CD4-positive, alpha-beta T cell (primary cell): ENCODE measurements at regions of chr2 and their contacts with region 1.

Region 1: DNA sequence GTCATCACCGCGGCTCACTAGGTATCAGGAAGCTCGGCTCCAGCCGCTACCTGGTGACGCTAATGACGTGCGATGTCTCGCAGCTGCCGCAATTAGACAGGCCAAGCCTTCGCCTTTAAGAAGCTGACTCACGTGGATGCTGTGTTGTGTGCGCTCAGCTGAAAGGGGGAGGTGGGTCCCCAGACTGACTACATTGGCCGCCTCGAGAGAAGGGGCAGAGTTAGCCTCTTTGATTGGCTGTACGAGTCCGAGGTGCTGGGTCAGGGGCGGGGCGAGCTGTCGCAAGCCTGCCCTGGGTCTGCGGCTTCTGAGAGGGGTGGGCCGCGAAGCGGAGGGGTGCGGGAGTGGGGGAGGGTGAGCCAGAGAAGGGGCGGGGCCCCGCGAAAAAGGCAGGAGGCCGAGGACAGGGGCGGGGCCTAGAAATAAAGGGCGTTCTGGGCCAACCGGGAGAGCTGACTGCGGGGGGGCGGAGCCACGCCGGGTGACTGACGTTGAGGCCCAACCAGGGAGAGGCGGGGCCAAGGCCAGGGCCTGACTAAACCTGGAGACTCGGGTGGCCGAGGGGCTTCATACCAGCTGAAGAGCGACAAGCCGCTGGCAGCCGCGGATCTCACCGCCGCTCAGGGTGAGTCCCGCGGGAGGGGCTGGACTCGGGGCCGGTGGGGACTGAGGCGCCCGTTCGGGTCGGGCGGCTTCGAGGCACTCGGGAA is at the start of gene YPEL5:
- DNase-seq: peak; percentile 99 to 100 (median 99)
- ATAC-seq: peak; percentile 82
- H3K4me3 ChIP-seq: peak within 1 kb of the TSS; percentile 71
- H3K4me3 Mint-ChIP-seq: peak within 1 kb of the TSS; percentile 94
- H3K27ac ChIP-seq: peak within 1 kb of the TSS; percentile 97 to 100
- H3K27ac Mint-ChIP-seq: peak within 1 kb of the TSS; percentile 99
- H3K4me1 ChIP-seq: peaks cover 38% of the 10 kb centered on the region
- H3K4me1 Mint-ChIP-seq: peaks cover 68% of the 10 kb centered on the region
- H3K27me3 ChIP-seq: no peaks in the 10 kb centered on the region
- H3K27me3 Mint-ChIP-seq: no peaks in the 10 kb centered on the region
- CTCF ChIP-seq: no peak
- total RNA-seq, gene YPEL5: 932 to 972 TPM

Region 2: GRCh38 chr2:29817801-29818680 is 328.6 kb before region 1 on chr2:
- CTCF ChIA-PET with region 1: no interaction called
- POLR2A ChIA-PET with region 1: no interaction called
- intact Hi-C with region 1: no loop called
- DNase-seq: no peak
- ATAC-seq: no peak
- H3K4me3 ChIP-seq: no peak overlapping the region
- H3K4me3 Mint-ChIP-seq: no peak overlapping the region
- H3K27ac ChIP-seq: no peak overlapping the region
- H3K27ac Mint-ChIP-seq: no peak overlapping the region
- H3K4me1 ChIP-seq: no peaks in the 10 kb centered on the region
- H3K4me1 Mint-ChIP-seq: no peaks in the 10 kb centered on the region
- H3K27me3 ChIP-seq: peaks cover 0 to 3% of the 10 kb centered on the region in 2 experiments
- H3K27me3 Mint-ChIP-seq: peaks cover 12% of the 10 kb centered on the region
- CTCF ChIP-seq: no peak

Region 3: GRCh38 chr2:30098266-30099005 is 48.2 kb before region 1 on chr2:
- CTCF ChIA-PET with region 1: no interaction called
- POLR2A ChIA-PET with region 1: interaction called, 4 read pairs
- intact Hi-C with region 1: loop called in 1 of 2 experiments (anchors 5 kb)
- DNase-seq: no peak
- ATAC-seq: no peak
- H3K4me3 ChIP-seq: no peak overlapping the region
- H3K4me3 Mint-ChIP-seq: no peak overlapping the region
- H3K27ac ChIP-seq: no peak overlapping the region
- H3K27ac Mint-ChIP-seq: no peak overlapping the region
- H3K4me1 ChIP-seq: no peaks in the 10 kb centered on the region
- H3K4me1 Mint-ChIP-seq: no peaks in the 10 kb centered on the region
- H3K27me3 ChIP-seq: peaks cover 4 to 9% of the 10 kb centered on the region in 2 experiments
- H3K27me3 Mint-ChIP-seq: peaks cover 46% of the 10 kb centered on the region
- CTCF ChIP-seq: no peak

Region 4: DNA sequence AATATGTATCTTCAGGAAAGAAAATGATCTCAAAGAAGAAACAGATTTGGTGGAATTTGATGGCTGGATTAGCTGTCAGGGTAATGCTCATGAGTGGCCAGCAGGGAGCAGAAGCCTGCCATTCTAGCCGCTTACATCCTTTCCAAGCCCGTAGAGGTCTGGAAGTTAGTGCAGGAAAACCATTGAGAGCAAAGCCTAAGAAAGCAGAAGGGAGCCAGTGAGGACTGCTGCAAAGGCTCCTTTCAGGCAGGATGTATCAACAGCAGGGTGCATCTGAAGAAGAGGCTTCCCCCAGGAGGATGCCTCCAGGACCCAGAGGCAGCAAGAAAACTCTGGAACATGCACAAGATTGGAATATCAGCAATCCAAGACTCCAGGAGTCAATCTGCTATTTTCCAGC is 61.9 kb after region 1 on chr2:
- CTCF ChIA-PET with region 1: no interaction called
- POLR2A ChIA-PET with region 1: interaction called, 28 read pairs
- intact Hi-C with region 1: no loop called
- DNase-seq: peak in 10 of 14 experiments; percentile 16 to 74 (median 33)
- ATAC-seq: peak; percentile 58
- H3K4me3 ChIP-seq: no peak overlapping the region
- H3K4me3 Mint-ChIP-seq: peak overlapping the region; percentile 42
- H3K27ac ChIP-seq: peak overlapping the region in 1 of 2 donors; percentile 9
- H3K27ac Mint-ChIP-seq: peak overlapping the region; percentile 82
- H3K4me1 ChIP-seq: peaks cover 21% of the 10 kb centered on the region
- H3K4me1 Mint-ChIP-seq: peaks cover 31% of the 10 kb centered on the region
- H3K27me3 ChIP-seq: no peaks in the 10 kb centered on the region
- H3K27me3 Mint-ChIP-seq: no peaks in the 10 kb centered on the region
- CTCF ChIP-seq: peak; percentile 96

Region 5: GRCh38 chr2:30225131-30225762 is 78.7 kb after region 1 on chr2:
- CTCF ChIA-PET with region 1: interaction called, 4 read pairs
- POLR2A ChIA-PET with region 1: interaction called, 115 read pairs
- intact Hi-C with region 1: loop called (anchors 2 kb)
- DNase-seq: peak; percentile 28 to 85 (median 50)
- ATAC-seq: peak; percentile 84
- H3K4me3 ChIP-seq: peak overlapping the region; percentile 65
- H3K4me3 Mint-ChIP-seq: peak overlapping the region; percentile 97
- H3K27ac ChIP-seq: peak overlapping the region; percentile 92 to 94
- H3K27ac Mint-ChIP-seq: peak overlapping the region; percentile 99
- H3K4me1 ChIP-seq: peaks cover 71% of the 10 kb centered on the region
- H3K4me1 Mint-ChIP-seq: peaks cover 81% of the 10 kb centered on the region
- H3K27me3 ChIP-seq: no peaks in the 10 kb centered on the region
- H3K27me3 Mint-ChIP-seq: no peaks in the 10 kb centered on the region
- CTCF ChIP-seq: no peak

Region 6: DNA sequence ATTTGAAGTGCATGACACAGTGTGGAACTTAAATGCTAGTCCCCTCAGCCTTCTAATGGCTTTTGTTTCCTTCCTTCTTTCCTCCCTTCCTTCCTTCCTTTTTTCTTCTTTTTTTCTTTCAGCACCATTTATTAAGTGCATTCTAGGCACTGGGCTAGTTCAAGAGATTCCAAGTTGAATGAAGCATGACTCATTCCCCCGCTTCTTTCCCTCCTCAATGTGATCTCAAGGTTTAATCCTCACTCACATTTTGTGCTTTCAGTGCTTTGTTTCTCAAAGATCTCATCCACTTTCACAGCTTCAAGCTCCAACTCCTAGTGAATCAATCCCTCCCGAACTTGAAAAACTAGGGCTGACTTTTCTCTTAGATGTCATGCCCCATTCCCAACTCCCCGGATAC is 174.9 kb after region 1 on chr2:
- CTCF ChIA-PET with region 1: no interaction called
- POLR2A ChIA-PET with region 1: no interaction called
- intact Hi-C with region 1: no loop called
- DNase-seq: no peak
- ATAC-seq: no peak
- H3K4me3 ChIP-seq: no peak overlapping the region
- H3K4me3 Mint-ChIP-seq: no peak overlapping the region
- H3K27ac ChIP-seq: no peak overlapping the region
- H3K27ac Mint-ChIP-seq: no peak overlapping the region
- H3K4me1 ChIP-seq: peaks cover 3% of the 10 kb centered on the region
- H3K4me1 Mint-ChIP-seq: peaks cover 43% of the 10 kb centered on the region
- H3K27me3 ChIP-seq: no peaks in the 10 kb centered on the region
- H3K27me3 Mint-ChIP-seq: no peaks in the 10 kb centered on the region
- CTCF ChIP-seq: no peak

Region 7: GRCh38 chr2:30447149-30448045 is 300.8 kb after region 1 on chr2 and contains the start of gene LCLAT1:
- CTCF ChIA-PET with region 1: no interaction called
- POLR2A ChIA-PET with region 1: interaction called, 16 read pairs
- intact Hi-C with region 1: loop called in 1 of 2 experiments (anchors 5 kb)
- DNase-seq: peak; percentile 68 to 94 (median 78)
- ATAC-seq: peak; percentile 84
- H3K4me3 ChIP-seq: peak within 1 kb of the TSS; percentile 82
- H3K4me3 Mint-ChIP-seq: peak within 1 kb of the TSS; percentile 99
- H3K27ac ChIP-seq: peak within 1 kb of the TSS; percentile 81 to 85
- H3K27ac Mint-ChIP-seq: peak within 1 kb of the TSS; percentile 99
- H3K4me1 ChIP-seq: peaks cover 14% of the 10 kb centered on the region
- H3K4me1 Mint-ChIP-seq: peaks cover 54% of the 10 kb centered on the region
- H3K27me3 ChIP-seq: no peaks in the 10 kb centered on the region
- H3K27me3 Mint-ChIP-seq: no peaks in the 10 kb centered on the region
- CTCF ChIP-seq: no peak
- total RNA-seq, gene LCLAT1: 8.3 to 10.2 TPM